Right ventricle myocardium superior (tissue), 1 donor: ENCODE measurements at regions of chr15 and their contacts with region 1.

Region 1: DNA sequence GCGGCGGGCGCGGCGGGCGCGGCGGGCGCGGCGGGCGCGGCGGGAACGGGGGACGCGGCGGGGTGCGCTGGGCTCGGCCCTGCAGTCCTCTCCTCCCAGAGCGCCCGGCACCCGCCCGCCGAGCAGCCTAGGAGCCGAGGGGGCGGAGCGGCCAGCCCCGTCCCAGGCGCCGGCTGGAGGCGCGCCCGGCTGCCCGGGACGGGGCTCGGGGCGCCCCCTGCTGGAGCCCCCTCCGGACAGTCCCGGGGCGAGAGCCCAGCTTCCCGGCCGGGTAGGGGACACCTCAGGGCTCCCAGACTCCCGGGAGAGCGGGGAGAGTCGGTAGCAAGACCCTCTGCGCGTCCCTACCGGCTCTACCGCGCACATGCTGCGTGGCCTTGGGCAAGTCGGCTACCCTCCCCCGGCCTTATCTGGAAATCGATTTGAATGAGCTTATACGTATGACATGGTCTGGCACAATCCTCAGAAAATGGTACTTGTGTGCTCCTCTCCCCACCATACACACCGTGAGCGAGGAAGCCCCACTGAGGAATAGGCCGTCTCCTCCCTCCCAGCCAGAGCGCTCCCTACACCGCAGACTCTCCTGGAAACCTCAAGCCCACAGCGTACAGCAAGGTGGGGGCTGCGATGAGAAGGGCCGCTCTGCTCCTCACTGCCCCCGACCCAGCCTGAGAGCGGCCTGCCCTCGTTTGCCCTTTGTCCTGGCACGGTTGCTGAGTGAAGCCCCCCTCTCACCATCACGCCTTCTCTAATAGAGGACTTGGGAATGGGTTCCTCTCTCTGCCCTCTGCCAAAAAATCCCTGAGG is at the start of gene DAPK2:
- DNase-seq: peak; percentile 88
- ATAC-seq: peak; percentile 88
- total RNA-seq, gene DAPK2: 48.2 TPM

Region 2: GRCh38 chr15:63860155-63860554 is 186.4 kb before region 1 on chr15:
- intact Hi-C with region 1: no loop called
- DNase-seq: no peak
- ATAC-seq: no peak

Region 3: DNA sequence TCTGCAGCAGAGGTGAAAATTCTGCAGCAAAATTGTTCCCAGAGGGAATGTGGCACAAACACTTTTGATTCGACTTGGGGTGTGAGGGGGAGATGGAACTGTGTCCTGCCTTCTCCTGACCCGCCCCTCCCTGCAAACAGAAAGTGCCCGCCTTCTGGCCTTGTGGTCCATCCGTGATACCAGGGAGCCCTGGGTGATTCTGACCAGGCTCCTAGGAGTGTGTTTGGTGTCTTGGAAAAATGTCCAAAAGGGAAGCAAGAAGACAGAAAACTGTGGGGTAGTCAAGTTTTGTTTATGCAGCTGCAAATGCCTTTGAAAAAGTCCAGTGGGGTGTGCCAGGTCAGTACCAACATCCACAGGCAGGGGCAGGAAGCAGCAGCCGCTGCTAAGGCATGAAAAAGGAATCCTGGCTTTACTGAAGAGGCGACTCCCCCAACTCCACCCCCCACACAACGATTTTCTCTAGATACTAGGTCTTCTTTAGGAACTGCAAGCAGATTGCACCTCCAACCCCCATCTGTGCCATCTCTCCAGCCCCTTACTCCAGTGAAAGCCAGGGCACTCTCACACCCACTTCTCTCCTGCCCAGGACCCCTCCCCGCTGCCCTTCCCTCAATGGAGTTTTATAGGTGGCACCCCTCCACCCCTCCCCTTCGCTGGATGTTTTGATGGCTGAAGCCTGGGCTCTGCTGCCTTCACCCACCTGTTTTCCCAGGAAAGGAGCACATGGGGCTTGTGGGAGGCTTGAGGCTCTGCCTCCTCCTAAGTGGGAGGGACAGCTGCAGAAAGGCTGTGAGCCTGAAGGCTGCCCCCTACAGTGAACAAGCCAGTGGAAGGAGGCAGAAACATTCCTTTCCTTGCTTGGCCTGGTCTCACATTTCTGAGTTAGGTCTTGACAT is 130.4 kb before region 1 on chr15:
- intact Hi-C with region 1: loop called (anchors 10 kb)
- DNase-seq: no peak
- ATAC-seq: peak; percentile 30

Region 4: GRCh38 chr15:63945007-63945788 is 101.4 kb before region 1 on chr15:
- intact Hi-C with region 1: loop called (anchors 10 kb)
- DNase-seq: peak; percentile 83
- ATAC-seq: peak; percentile 72

Region 5: GRCh38 chr15:63986751-63987341 is 59.7 kb before region 1 on chr15:
- intact Hi-C with region 1: loop called (anchors 10 kb)
- DNase-seq: peak; percentile 64
- ATAC-seq: no peak

Region 6: GRCh38 chr15:64089543-64090280 is 43.2 kb after region 1 on chr15:
- intact Hi-C with region 1: no loop called
- DNase-seq: no peak
- ATAC-seq: peak; percentile 14